GM10248 (cell line): ENCODE measurements at regions of chr14 and their contacts with region 1.

Region 1: GRCh38 chr14:94036313-94037050 is 10.3 kb downstream of the OTUB2 start:
- DNase-seq: peak; percentile 84
- CTCF ChIP-seq: peak; percentile 75

Region 2: GRCh38 chr14:94051115-94051514 is 14.6 kb after region 1 on chr14:
- CTCF ChIA-PET with region 1: interaction called, 57 read pairs
- POLR2A ChIA-PET with region 1: no interaction called
- DNase-seq: no peak
- CTCF ChIP-seq: peak; percentile 13

Region 3: GRCh38 chr14:94066089-94066676 is 29.7 kb after region 1 on chr14:
- CTCF ChIA-PET with region 1: interaction called, 14 read pairs
- POLR2A ChIA-PET with region 1: no interaction called
- DNase-seq: no peak
- CTCF ChIP-seq: no peak

Region 4: DNA sequence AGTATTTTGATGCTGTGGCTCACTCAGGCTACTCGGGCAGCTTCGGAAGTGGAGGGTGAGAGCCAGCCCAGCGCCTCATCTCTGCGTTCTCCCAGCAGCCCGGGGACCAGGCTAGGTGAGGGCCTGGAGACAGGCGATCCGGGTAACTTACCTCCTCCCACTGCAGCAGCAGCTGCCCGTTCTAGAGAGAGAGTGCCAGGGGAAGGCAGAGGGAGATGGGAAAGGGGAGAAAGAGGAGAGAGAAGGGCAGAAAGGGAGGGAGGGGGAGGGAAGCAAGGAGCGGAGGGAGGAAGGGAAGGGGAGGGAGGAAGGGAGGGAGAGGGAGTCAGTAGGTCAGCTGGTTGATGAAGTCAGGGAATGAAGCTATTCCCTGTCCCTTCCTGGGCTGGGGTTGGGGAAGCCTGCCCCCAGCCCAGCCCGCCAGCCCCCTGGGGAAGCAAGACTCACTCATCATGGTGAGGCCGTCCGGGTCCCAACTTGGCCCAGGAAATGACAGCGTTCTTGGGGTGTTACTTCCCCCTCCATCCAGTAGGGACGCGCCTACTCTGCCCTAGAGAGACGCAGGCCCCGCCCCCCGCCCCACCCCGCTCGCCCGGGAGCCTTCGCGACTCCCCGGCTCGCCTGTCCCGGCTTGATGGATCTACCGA is 92.8 kb after region 1 on chr14 and contains the start of gene IFI27L2:
- CTCF ChIA-PET with region 1: interaction called, 57 read pairs
- POLR2A ChIA-PET with region 1: no interaction called
- DNase-seq: peak; percentile 95
- CTCF ChIP-seq: peak; percentile 2

Region 5: DNA sequence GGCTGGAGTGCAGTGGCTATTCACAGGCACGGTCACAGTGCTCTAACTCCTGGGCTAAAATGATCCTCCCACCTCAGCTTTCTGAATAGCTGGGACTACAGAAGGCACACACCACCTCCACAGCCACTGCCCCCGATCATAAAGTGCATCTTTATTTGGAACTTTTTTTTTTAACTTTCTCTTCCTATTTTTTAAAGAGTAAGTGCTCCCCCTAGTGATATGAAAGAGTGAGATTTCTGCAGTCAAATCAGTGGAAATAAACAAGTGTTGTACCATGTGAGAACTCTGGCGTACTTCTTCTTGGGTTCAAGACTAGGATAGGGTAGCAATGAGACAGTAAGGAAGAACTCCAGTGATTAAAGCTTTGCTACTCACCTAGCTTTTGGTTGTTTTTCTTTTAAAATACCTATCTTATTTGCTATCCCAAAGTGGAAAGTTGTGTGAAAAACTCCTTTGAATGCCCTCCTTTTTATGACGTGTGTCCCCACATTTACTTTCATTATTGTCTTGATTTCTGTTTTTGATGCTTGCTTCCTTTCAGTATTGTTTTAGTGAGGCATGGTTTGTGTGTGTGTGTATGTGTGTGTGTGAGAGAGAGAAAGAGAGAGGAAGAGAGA is 144.3 kb after region 1 on chr14:
- CTCF ChIA-PET with region 1: interaction called, 32 read pairs
- POLR2A ChIA-PET with region 1: no interaction called
- DNase-seq: peak; percentile 35
- CTCF ChIP-seq: peak; percentile 61